Tibial artery (tissue), 4 donors: ENCODE measurements at regions of chr4 and their contacts with region 1.

Region 1: DNA sequence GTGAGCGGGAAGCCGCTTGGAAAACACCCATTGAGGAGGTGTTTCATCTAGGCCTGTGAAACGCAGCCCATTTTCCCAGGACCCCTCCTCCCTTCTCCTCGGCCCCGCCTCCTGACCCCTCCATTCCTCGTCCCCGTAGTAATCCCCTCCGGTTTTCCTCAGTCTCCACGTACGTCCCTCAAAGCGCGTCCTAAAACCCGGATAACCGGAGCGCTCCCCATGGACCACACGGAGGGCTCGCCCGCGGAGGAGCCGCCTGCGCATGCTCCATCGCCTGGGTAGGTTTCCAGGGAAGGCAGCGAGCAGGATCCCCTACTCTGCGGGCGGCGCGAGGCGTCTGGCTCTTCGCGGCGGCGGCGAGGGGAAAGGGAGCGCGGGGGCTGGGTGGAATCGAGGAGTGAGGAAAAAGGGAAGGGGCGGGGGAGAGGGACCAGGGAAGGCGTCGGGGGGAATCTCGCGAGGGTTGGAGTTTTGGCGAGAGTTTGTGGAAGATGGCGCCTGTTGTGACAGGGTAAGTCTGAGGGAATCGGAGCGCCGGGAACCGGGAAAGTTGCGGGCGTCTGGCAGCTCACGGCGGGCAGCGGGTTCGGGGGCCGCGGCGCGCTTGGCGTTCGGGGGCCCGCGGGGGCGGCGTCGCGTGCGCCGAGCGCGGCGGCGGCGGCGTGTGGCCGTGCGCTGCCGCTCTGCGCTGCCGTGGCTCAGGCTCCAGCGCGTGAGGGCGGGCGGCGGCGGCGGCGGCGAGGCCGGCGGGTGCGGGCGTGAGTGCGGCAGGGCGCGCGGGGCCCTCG is at the start of gene RBPJ:
- DNase-seq: peak; percentile 87 to 95
- H3K4me3 ChIP-seq: peak within 1 kb of the TSS; percentile 65 to 73
- H3K27ac ChIP-seq: peak within 1 kb of the TSS; percentile 93 to 97
- H3K4me1 ChIP-seq: peaks cover 0 to 36% (median 30%) of the 10 kb centered on the region in 4 donors
- H3K27me3 ChIP-seq: no peaks in the 10 kb centered on the region
- CTCF ChIP-seq: no peak

Region 2: GRCh38 chr4:25818371-25818871 is 502.3 kb before region 1 on chr4:
- intact Hi-C with region 1: no loop called
- DNase-seq: no peak
- H3K4me3 ChIP-seq: no peak overlapping the region
- H3K27ac ChIP-seq: no peak overlapping the region
- H3K4me1 ChIP-seq: peaks cover 0 to 6% (median 0%) of the 10 kb centered on the region in 4 donors
- H3K27me3 ChIP-seq: no peaks in the 10 kb centered on the region
- CTCF ChIP-seq: no peak

Region 3: DNA sequence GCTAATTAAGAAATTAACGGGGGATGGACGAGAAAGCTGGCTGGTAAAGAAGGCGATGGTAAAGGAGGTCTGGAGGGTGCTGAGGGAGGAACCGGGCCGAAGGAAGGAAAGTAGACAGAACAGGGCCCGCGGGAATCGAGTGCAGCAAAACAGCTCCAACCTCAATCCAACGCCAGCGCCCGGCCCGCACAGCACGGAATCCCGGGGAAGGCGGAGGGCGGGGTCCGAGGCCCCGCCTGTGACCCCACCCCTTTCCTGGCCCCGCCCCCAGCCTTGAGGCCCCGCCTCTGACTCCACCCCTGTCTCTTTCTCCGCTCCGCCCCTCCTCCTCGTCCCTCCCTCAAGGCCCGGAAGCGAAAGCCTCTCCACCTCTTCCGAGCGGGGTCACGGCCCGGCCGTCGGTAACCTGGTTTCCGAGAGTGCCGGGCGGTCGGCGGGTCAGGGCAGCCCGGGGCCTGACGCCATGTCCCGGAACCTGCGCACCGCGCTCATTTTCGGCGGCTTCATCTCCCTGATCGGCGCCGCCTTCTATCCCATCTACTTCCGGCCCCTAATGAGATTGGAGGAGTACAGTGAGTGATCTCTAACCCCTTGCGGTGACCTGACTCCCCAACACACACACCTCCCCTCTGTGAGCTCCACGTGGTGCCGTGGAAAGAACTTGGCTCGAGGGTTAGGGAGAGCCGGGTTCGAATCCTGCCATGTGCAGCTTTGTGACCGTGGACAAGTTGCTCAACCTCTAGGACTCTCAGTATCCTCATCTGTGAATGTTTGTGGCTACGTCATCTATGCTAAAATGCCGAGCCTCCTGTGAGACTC is 406.7 kb before region 1 on chr4 and contains the start of gene SMIM20:
- intact Hi-C with region 1: loop called (anchors 5 kb)
- DNase-seq: peak; percentile 90 to 95
- H3K4me3 ChIP-seq: peak within 1 kb of the TSS; percentile 71 to 90
- H3K27ac ChIP-seq: peak within 1 kb of the TSS; percentile 85 to 90
- H3K4me1 ChIP-seq: peaks cover 0 to 19% (median 12%) of the 10 kb centered on the region in 4 donors
- H3K27me3 ChIP-seq: no peaks in the 10 kb centered on the region
- CTCF ChIP-seq: no peak